ENCODE measurements at regions of chr10 and their contacts with region 1.

Region 1: DNA sequence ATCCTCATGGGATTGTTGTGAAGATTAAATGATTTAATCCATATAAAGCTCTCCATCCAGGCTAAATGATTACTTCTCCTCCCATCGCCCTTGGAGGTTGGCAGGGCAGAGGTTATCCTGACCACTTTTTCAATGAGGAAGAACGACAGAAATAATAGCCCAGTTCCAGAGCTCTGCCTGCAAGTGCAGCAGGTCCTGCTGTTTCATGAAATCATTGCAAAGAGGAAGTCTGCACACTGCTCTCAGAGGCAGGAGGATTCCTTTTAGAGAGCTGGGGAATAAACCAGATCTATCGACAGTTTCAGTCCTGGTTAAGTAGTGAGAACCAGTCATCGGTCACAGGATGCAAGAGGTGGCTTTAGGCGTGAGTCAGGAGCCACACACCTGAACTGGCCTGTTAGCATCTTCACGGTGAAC is 25.0 kb upstream of the CDH23 start:
- DNase-seq: peak in 1 of 14 experiments; percentile 23
- ATAC-seq: no peak
- H3K4me3 ChIP-seq: no peak overlapping the region
- H3K4me3 Mint-ChIP-seq: no peak overlapping the region
- H3K27ac ChIP-seq: no peak overlapping the region
- H3K27ac Mint-ChIP-seq: no peak overlapping the region
- H3K4me1 ChIP-seq: peaks cover 2% of the 10 kb centered on the region
- H3K4me1 Mint-ChIP-seq: no peaks in the 10 kb centered on the region
- H3K27me3 ChIP-seq: no peaks in the 10 kb centered on the region
- H3K27me3 Mint-ChIP-seq: peaks cover 21% of the 10 kb centered on the region
- CTCF ChIP-seq: no peak

Region 2: DNA sequence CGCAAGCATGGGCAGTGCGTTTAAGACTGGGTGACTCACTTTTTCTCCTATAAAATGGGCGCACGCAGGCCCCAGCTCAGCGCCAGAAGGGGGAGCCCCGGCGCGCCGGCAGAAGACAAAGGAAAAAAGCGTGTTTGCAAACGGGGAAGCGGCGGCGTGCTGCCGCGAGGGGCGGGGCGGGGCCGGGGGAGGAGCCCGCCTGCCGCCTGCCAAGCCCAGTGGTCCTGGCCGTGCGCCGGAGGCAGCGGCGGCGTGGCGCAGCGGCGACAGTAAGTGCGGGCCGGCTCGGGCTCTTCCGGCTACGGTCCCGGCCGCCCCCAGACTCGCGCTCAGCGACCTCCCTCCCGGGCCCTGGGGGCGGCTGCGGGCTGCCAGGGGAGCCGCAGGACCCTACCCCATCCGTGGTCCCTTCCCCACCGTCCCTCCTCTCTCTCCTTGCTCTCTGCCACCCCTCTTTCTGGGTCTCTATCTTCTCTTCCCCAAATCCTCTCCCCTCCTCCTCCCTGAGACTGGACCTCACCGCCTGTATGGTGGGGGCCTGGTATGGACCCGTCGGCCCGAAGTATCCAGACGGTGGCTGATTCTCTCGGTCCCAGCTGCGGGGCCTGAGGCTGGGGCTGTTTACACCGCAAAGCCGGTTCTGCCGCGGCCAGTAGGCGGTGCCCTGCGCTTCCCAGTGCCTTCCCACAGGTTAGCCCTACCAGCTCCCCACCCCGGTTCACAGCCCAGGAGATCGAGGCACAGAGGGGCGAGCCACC is 52.5 kb before region 1 on chr10 and contains the start of gene SLC29A3:
- CTCF ChIA-PET with region 1: interaction called, 8 read pairs
- POLR2A ChIA-PET with region 1: interaction called, 8 read pairs
- intact Hi-C with region 1: loop called (anchors 2 to 10 kb)
- DNase-seq: peak; percentile 69 to 93 (median 79)
- ATAC-seq: peak; percentile 86
- H3K4me3 ChIP-seq: peak within 1 kb of the TSS; percentile 88
- H3K4me3 Mint-ChIP-seq: peak within 1 kb of the TSS; percentile 97
- H3K27ac ChIP-seq: no peak within 1 kb of the TSS
- H3K27ac Mint-ChIP-seq: peak within 1 kb of the TSS; percentile 66
- H3K4me1 ChIP-seq: peaks cover 32% of the 10 kb centered on the region
- H3K4me1 Mint-ChIP-seq: peaks cover 31% of the 10 kb centered on the region
- H3K27me3 ChIP-seq: no peaks in the 10 kb centered on the region
- H3K27me3 Mint-ChIP-seq: no peaks in the 10 kb centered on the region
- CTCF ChIP-seq: peak; percentile 56
- total RNA-seq, gene SLC29A3: 2.3 to 2.5 TPM

Region 3: DNA sequence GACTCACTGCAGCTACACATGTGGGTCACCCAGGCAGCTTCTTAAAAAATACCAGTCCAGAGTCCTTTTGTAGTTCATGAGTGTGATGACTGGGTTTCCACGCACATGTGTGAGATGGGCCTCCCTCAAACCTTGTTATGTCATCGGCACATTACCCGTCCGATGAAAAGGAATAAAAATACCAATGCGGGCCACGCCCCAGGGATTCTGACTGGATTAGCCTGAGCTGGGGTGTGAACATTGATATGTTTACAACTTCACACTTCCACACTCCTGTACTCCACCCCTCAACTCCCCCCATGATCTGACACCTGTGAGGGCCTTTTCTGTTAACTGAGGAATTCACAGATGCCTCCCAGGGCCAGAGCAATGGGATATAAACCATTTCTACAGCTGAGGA is 46.5 kb before region 1 on chr10:
- CTCF ChIA-PET with region 1: interaction called, 8 read pairs
- POLR2A ChIA-PET with region 1: no interaction called
- intact Hi-C with region 1: loop called in 1 of 2 experiments (anchors 2 kb)
- DNase-seq: no peak
- ATAC-seq: no peak
- H3K4me3 ChIP-seq: no peak overlapping the region
- H3K4me3 Mint-ChIP-seq: no peak overlapping the region
- H3K27ac ChIP-seq: no peak overlapping the region
- H3K27ac Mint-ChIP-seq: no peak overlapping the region
- H3K4me1 ChIP-seq: peaks cover 11% of the 10 kb centered on the region
- H3K4me1 Mint-ChIP-seq: peaks cover 22% of the 10 kb centered on the region
- H3K27me3 ChIP-seq: no peaks in the 10 kb centered on the region
- H3K27me3 Mint-ChIP-seq: no peaks in the 10 kb centered on the region
- CTCF ChIP-seq: no peak

Region 4: GRCh38 chr10:72354478-72355213 is 982.9 kb after region 1 on chr10 and contains the start of gene DNAJB12:
- CTCF ChIA-PET with region 1: no interaction called
- POLR2A ChIA-PET with region 1: no interaction called
- intact Hi-C with region 1: loop called in 1 of 2 experiments (anchors 10 kb)
- DNase-seq: peak; percentile 78 to 96 (median 88)
- ATAC-seq: peak; percentile 86
- H3K4me3 ChIP-seq: peak within 1 kb of the TSS; percentile 95
- H3K4me3 Mint-ChIP-seq: peak within 1 kb of the TSS; percentile 99
- H3K27ac ChIP-seq: peak within 1 kb of the TSS; percentile 95 to 97
- H3K27ac Mint-ChIP-seq: peak within 1 kb of the TSS; percentile 92
- H3K4me1 ChIP-seq: peaks cover 28% of the 10 kb centered on the region
- H3K4me1 Mint-ChIP-seq: peaks cover 47% of the 10 kb centered on the region
- H3K27me3 ChIP-seq: no peaks in the 10 kb centered on the region
- H3K27me3 Mint-ChIP-seq: no peaks in the 10 kb centered on the region
- CTCF ChIP-seq: no peak
- total RNA-seq, gene DNAJB12: 25.2 to 27.0 TPM